ENCODE measurements at regions of chr17 and their contacts with region 1.

Region 1: GRCh38 chr17:28494445-28495188 is 11.5 kb upstream of the FOXN1 start:
- DNase-seq: peak; percentile 73
- H3K4me3 ChIP-seq: no peak overlapping the region
- H3K27ac ChIP-seq: no peak overlapping the region
- H3K4me1 ChIP-seq: no peaks in the 10 kb centered on the region
- CTCF ChIP-seq: peak; percentile 92

Region 2: DNA sequence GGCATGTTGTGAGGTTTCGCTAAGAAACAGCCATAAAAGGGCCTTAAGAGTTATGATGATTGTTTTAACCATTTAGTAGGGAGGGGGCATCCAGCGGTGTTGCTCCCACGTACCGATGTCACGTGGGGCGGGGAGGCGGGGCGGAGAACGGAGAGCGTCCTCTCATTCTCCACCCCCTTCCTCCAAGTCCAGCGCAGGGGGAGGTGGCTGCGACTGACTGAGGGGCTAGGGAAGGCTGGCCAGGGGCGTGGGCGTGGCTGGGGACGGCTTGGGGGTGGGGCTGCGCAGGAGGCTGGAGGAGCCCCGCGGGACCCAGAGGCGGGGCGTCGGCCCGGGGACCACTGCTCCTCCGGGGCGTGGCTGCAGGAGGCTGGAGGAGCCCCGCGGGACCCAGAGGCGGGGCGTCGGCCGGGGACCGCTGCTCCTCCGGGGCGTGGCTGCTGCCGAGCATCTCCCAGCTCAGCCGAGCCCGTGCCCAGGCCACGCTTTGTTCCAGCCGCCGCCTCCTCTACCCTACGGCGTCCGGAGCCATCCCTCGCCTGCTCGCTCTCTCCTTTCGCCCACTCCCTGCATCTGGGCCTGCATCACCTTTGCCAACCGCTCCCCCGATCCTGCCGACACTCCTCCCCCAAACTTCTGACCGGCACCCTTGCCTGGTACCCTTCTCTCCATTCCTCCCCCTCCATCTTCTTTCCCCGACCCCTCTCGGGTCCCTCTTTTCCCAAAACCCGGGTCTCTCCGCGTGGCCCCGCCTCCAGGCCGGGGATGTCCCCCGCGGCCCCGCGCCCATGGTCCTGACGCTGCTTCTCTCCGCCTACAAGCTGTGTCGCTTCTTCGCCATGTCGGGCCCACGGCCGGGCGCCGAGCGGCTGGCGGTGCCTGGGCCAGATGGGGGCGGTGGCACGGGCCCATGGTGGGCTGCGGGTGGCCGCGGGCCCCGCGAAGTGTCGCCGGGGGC is 123.1 kb before region 1 on chr17 and contains the start of gene SARM1:
- CTCF ChIA-PET with region 1: no interaction called
- POLR2A ChIA-PET with region 1: interaction called, 14 read pairs
- intact Hi-C with region 1: no loop called
- DNase-seq: peak; percentile 91
- H3K4me3 ChIP-seq: peak within 1 kb of the TSS; percentile 80
- H3K27ac ChIP-seq: peak within 1 kb of the TSS; percentile 32
- H3K4me1 ChIP-seq: peaks cover 20% of the 10 kb centered on the region
- CTCF ChIP-seq: no peak
- total RNA-seq, gene SARM1: 4.7 and 7.5 TPM in 2 replicates

Region 3: GRCh38 chr17:28540231-28540630 is 45.6 kb after region 1 on chr17:
- CTCF ChIA-PET with region 1: no interaction called
- POLR2A ChIA-PET with region 1: no interaction called
- intact Hi-C with region 1: loop called (anchors 1 kb)
- DNase-seq: no peak
- H3K4me3 ChIP-seq: no peak overlapping the region
- H3K27ac ChIP-seq: no peak overlapping the region
- H3K4me1 ChIP-seq: peaks cover 5% of the 10 kb centered on the region
- CTCF ChIP-seq: no peak

Region 4: DNA sequence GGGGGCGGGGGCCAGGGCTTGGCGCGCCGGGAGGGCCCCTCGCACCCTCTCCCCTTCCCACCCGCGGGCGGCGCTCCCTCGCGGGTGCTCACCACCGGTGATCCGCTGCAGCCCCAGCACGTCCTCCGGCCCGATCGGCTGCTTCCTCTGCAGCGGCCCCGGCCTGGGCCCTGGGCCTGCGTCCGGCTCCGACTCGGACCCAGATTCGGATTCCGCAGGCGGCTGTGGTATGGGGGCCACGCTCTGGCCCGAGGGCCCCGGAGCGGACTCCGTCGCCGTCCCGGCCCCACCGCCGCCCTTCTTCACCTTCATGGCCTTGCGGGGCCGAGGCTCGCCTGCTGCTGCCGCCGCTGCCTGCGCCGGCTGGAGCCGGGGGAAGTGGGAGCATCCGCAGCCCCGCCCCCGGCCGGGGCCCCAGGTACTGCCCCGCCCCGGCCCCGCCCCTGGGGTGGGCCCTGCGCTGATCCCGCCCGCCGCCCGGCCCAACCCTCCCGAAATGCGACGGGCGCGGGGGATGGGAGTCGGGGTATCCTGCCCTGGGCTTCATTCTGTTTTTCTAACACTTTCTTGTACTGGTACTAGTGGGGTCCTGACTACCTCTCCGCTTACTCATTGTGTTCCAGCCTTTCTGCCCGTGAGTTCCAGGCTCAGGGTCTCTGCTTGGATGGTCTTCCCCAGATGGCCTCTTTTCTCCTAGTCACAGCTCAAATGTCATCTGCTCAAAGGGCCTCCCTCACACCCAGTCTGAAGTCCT is 57.8 kb after region 1 on chr17 and contains the start of gene UNC119:
- CTCF ChIA-PET with region 1: no interaction called
- POLR2A ChIA-PET with region 1: no interaction called
- intact Hi-C with region 1: loop called (anchors 2 kb)
- DNase-seq: peak; percentile 86
- H3K4me3 ChIP-seq: peak within 1 kb of the TSS; percentile 73
- H3K27ac ChIP-seq: no peak within 1 kb of the TSS
- H3K4me1 ChIP-seq: peaks cover 26% of the 10 kb centered on the region
- CTCF ChIP-seq: no peak
- total RNA-seq, gene UNC119: 10.5 and 14.2 TPM in 2 replicates

Region 5: GRCh38 chr17:28579526-28579925 is 84.9 kb after region 1 on chr17:
- CTCF ChIA-PET with region 1: no interaction called
- POLR2A ChIA-PET with region 1: no interaction called
- intact Hi-C with region 1: no loop called
- DNase-seq: no peak
- H3K4me3 ChIP-seq: no peak overlapping the region
- H3K27ac ChIP-seq: no peak overlapping the region
- H3K4me1 ChIP-seq: peaks cover 7% of the 10 kb centered on the region
- CTCF ChIP-seq: no peak

Region 6: GRCh38 chr17:28612936-28613872 is 118.6 kb after region 1 on chr17:
- CTCF ChIA-PET with region 1: interaction called, 3 read pairs
- POLR2A ChIA-PET with region 1: no interaction called
- intact Hi-C with region 1: loop called (anchors 1 kb)
- DNase-seq: peak; percentile 55
- H3K4me3 ChIP-seq: no peak overlapping the region
- H3K27ac ChIP-seq: peak overlapping the region; percentile 31
- H3K4me1 ChIP-seq: peaks cover 23% of the 10 kb centered on the region
- CTCF ChIP-seq: peak; percentile 83